ENCODE measurements at regions of chr20 and their contacts with region 1.

Region 1: DNA sequence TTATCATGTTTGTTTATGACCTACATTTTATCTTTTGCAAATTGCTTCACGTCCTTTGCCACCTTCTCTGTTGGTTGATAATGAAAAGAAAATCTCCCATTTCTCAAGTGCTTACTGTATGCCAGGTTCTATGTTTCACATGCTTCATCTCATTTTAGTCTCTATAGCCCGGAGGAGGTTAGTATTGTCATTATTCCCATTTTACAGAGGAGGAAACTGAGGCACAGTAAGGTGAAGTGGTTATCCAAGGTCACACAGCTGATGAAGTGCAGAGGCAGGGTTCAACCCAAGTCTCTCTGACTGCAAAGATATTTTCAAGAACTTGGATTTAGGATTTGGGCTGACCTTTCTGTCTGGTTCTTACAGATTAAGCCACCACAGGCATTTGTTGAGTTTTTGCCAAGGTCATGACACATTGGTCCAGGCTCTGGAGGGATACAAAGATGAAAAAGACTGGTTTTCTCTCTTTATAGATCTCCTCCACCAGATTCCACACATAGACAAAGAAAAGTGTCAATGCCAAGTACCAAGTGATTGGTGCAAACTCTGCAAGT is 20.6 kb downstream of the CNBD2 start:
- DNase-seq: no peak
- H3K4me3 ChIP-seq: no peak overlapping the region
- H3K4me1 ChIP-seq: no peaks in the 10 kb centered on the region
- H3K27me3 ChIP-seq: peaks cover 6% of the 10 kb centered on the region

Region 2: GRCh38 chr20:36135159-36135558 is 146.2 kb after region 1 on chr20:
- in situ Hi-C with region 1: loop called (anchors 5 kb)
- DNase-seq: no peak
- H3K4me3 ChIP-seq: no peak overlapping the region
- H3K4me1 ChIP-seq: peaks cover 10% of the 10 kb centered on the region
- H3K27me3 ChIP-seq: no peaks in the 10 kb centered on the region

Measured in HAP-1 (cell line).